GM10248 (cell line): ENCODE measurements at regions of chr17 and their contacts with region 1.

Region 1: GRCh38 chr17:17641621-17642409 is 39.4 kb upstream of the RAI1 start:
- DNase-seq: peak; percentile 77
- CTCF ChIP-seq: peak; percentile 88

Region 2: GRCh38 chr17:17653343-17653742 is 11.5 kb after region 1 on chr17:
- CTCF ChIA-PET with region 1: interaction called, 24 read pairs
- POLR2A ChIA-PET with region 1: no interaction called
- DNase-seq: no peak
- CTCF ChIP-seq: no peak

Region 3: GRCh38 chr17:17663160-17664063 is 21.6 kb after region 1 on chr17:
- CTCF ChIA-PET with region 1: interaction called, 21 read pairs
- POLR2A ChIA-PET with region 1: no interaction called
- DNase-seq: peak; percentile 91
- CTCF ChIP-seq: no peak